AG04450 (cell line): ENCODE measurements at regions of chr3 and their contacts with region 1.

Region 1: DNA sequence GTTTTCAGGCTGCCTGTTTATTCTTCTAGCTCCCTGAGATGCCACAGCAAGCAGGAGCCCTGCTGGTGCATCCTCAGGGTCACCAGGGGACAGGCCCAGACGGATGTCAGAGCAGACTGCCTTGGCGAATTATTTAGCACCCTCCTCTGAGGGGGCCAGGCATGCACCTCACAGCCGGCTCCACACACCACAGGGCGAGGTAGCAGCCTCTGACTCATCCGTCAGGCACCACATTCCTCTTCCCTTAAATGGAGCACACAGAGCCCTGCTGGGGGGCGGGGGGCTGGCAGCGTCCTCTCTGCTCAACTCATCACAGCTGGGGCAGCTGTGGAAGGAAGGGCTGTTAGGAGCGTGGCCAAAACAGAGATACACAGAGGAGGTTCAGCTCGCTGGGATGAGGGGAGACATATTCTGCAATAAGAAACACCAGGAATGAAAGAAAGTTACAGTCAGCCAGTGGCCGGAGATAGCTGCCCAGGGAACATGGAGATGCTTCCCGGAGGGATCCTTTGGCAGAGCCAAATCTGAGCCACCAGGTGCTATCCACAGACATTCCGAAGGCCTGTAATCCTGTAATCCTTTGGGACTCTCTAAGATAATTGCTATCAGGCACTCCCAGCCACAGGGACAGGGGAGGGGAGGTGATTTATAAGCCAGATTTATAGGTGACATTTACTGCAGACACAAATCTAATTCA is 13.9 kb upstream of the PRICKLE2 start:
- DNase-seq: peak; percentile 95
- H3K4me3 ChIP-seq: peak overlapping the region; percentile 37
- H3K27ac ChIP-seq: peak overlapping the region; percentile 90
- H3K27me3 ChIP-seq: no peaks in the 10 kb centered on the region
- CTCF ChIP-seq: no peak

Region 2: DNA sequence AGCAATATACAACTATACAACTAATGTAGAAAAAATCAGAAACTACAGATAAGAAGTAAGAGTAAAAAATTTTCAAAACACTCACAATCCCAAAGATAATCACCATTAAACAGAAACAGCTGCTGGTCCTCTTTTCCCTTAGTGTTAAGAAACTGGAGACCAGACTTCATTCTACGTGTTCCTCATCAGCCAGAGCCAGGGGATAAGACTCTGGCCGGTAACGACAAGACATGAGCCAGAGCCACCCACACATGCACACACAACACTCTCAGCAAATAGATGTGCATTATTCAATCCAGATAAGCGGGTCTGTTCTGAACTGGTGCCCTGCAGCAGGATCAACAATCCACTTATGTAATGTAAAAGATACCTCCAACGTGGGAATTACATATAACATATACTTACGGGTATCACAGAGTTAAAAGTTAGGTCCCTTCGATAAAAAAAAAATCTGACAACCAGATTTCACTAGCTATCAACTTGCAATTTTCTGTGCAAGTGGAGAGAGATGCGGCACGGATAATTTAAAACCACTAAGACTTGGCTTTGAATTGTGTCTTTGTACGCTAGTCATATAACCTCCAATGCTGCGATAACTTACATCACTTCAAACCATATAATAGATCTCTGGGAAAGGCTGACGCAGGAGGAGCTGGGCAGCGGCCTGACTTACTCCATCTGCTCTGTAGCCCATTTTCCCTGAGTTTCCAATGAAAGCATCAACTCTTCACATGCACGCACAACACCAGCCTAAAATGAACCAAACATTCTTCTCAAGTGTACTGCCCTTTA is 31.6 kb before region 1 on chr3:
- CTCF ChIA-PET with region 1: no interaction called
- POLR2A ChIA-PET with region 1: no interaction called
- DNase-seq: no peak
- H3K4me3 ChIP-seq: no peak overlapping the region
- H3K27ac ChIP-seq: peak overlapping the region; percentile 68
- H3K27me3 ChIP-seq: no peaks in the 10 kb centered on the region
- CTCF ChIP-seq: no peak

Region 3: DNA sequence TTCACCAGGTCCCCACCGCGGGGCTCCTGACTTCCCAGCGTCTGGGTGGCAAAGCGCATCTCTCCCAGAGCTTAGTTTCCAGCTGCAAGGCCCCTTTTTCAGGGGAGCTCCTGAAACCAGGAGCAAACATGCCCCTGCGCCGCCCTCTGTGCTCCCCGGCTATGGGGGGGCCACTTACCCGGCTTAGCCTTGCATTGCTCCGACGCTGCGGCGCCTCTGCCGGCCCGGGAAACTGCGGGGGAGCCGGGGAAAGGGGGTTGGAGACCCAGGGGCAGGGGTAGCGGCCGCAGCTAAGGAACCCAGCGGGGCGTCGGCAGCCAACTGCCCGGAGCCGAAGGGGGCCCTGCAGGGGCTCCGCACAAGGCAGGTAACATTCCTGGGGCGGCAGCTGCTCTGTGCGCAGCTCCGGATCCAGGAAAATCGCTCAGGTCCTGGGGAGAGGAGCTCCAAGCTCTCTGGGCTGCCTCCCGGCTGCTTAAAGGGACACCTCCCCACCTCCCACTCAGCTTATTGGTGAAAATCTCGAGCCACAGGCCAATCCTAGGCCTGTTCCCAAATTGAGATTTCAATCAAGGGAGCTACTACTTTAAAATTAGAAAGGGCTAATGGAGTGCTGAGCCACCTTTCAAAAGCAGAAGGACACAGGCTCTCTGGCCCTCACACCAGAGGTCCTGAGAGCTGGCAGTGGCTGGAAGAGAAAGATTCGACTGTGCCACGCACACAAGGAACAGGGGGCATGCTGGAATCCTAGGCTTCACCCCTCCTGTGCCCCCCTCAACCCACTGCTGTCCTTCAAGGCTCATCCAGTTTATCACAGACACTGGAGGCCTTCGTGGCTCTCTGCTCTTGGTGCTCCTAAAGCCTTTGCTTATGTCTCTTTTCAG is 28.8 kb after region 1 on chr3:
- CTCF ChIA-PET with region 1: interaction called, 3 read pairs
- POLR2A ChIA-PET with region 1: interaction called, 11 read pairs
- DNase-seq: peak; percentile 36
- H3K4me3 ChIP-seq: peak overlapping the region; percentile 78
- H3K27ac ChIP-seq: peak overlapping the region; percentile 68
- H3K27me3 ChIP-seq: no peaks in the 10 kb centered on the region
- CTCF ChIP-seq: 0 out of 2 replicates have a peak, but pooled peaks have one; percentile 14